ENCODE measurements at regions of chr18 and their contacts with region 1.

Region 1: DNA sequence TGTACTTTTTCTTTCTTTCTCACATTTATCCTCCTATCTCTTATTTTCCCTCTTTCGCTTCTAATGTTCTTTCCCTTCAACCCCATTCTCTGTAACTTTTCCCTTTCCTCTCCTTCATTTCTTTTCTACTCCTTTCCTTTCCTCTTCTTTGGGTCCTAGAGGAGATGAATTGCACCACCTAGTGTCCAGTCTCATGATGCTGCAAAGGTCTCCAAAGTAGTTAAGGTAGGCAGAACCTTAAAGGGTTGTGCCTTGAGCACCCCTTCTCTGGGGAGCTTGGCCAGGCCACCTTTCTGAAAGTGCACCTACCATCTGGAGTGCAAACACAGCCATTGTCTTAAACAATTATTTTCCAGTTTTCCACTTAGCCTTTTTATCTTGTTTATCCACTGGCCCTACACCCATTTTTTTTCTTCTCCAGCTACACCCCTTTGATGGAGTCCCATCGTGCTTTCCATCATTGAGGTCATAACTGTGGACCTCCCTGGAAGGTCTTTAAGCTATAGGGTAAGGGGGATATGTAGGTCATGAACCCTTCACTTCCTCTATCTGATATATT is 156.0 kb downstream of the ESCO1 start:
- DNase-seq: peak in 1 of 2 donors; percentile 25
- ATAC-seq: peak in 3 of 8 donors; percentile 62 to 73 (median 72)
- H3K4me3 ChIP-seq: no peak overlapping the region
- H3K27ac ChIP-seq: no peak overlapping the region
- H3K4me1 ChIP-seq: peaks cover 0 to 7% (median 0%) of the 10 kb centered on the region in 9 donors
- H3K27me3 ChIP-seq: no peaks in the 10 kb centered on the region
- CTCF ChIP-seq: peak in 8 of 9 donors; percentile 37 to 70 (median 63)

Region 2: GRCh38 chr18:21191596-21192307 is 252.8 kb before region 1 on chr18:
- intact Hi-C with region 1: loop called in 9 of 10 experiments (anchors 1 to 5 kb)
- DNase-seq: peak; percentile 20 to 21
- ATAC-seq: peak in 6 of 8 donors; percentile 51 to 85 (median 59)
- H3K4me3 ChIP-seq: no peak overlapping the region
- H3K27ac ChIP-seq: no peak overlapping the region
- H3K4me1 ChIP-seq: no peaks in the 10 kb centered on the region
- H3K27me3 ChIP-seq: peaks cover 0 to 7% (median 0%) of the 10 kb centered on the region in 7 donors
- CTCF ChIP-seq: peak in 7 of 9 donors; percentile 44 to 66 (median 55)

Region 3: GRCh38 chr18:21203096-21203495 is 241.4 kb before region 1 on chr18:
- intact Hi-C with region 1: loop called in 2 of 10 experiments (anchors 5 kb)
- DNase-seq: no peak
- ATAC-seq: no peak
- H3K4me3 ChIP-seq: no peak overlapping the region
- H3K27ac ChIP-seq: no peak overlapping the region
- H3K4me1 ChIP-seq: no peaks in the 10 kb centered on the region
- H3K27me3 ChIP-seq: peaks cover 0 to 18% (median 5%) of the 10 kb centered on the region in 7 donors
- CTCF ChIP-seq: no peak

Region 4: GRCh38 chr18:21242141-21242779 is 202.3 kb before region 1 on chr18 and contains the start of gene GREB1L:
- intact Hi-C with region 1: loop called in 6 of 10 experiments (anchors 2 to 10 kb)
- DNase-seq: peak; percentile 42 to 69
- ATAC-seq: peak; percentile 86 to 97 (median 94)
- H3K4me3 ChIP-seq: peak within 1 kb of the TSS; percentile 48 to 71 (median 66)
- H3K27ac ChIP-seq: peak within 1 kb of the TSS in 8 of 10 donors; percentile 12 to 77 (median 58)
- H3K4me1 ChIP-seq: peaks cover 0 to 21% (median 16%) of the 10 kb centered on the region in 9 donors
- H3K27me3 ChIP-seq: peaks cover 0 to 80% (median 46%) of the 10 kb centered on the region in 7 donors
- CTCF ChIP-seq: peak in 6 of 9 donors; percentile 19 to 58 (median 44)
- total RNA-seq, gene GREB1L: 2.7 to 14.3 (median 11.8) TPM

Region 5: DNA sequence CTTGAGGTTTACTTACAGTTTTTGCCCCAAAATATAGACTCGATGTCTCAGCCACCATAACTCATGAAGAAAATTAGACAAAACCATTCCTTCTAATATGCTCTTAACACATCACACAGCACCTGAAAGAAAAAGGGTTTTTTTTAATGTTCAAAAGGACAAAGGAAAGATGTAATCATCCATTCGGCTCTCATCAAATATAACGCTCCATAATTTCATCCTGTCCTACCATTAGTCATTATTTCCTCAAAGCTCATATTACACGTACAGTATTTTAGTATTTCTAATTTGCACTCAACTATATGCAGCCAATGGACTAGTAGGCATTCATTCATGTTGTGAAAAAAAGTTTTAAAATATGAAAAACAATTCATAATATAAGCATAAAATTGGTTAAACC is 131.1 kb after region 1 on chr18:
- intact Hi-C with region 1: no loop called
- DNase-seq: no peak
- ATAC-seq: no peak
- H3K4me3 ChIP-seq: no peak overlapping the region
- H3K27ac ChIP-seq: no peak overlapping the region
- H3K4me1 ChIP-seq: peaks cover 0 to 11% (median 0%) of the 10 kb centered on the region in 9 donors
- H3K27me3 ChIP-seq: no peaks in the 10 kb centered on the region
- CTCF ChIP-seq: no peak

Measured in heart right ventricle (tissue), 16 donors.